HepG2 (cell line): ENCODE measurements at regions of chr7 and their contacts with region 1.

Region 1: GRCh38 chr7:102390697-102391484 is 5.3 kb upstream of the PRKRIP1 start:
- DNase-seq: peak; percentile 68
- ATAC-seq: peak; percentile 93
- H3K4me3 ChIP-seq: no peak overlapping the region
- H3K27ac ChIP-seq: no peak overlapping the region
- H3K4me1 ChIP-seq: peaks cover 7% of the 10 kb centered on the region; the same call in 1 of the 2 replicates
- H3K27me3 ChIP-seq: no peaks in the 10 kb centered on the region
- CTCF ChIP-seq: peak; percentile 95
- EP300 ChIP-seq: no peak
- POLR2A ChIP-seq: peak in 1 of 2 experiments; percentile 41; a peak in 1 of 4 replicates
- RAD21 ChIP-seq: peak; percentile 91

Region 2: DNA sequence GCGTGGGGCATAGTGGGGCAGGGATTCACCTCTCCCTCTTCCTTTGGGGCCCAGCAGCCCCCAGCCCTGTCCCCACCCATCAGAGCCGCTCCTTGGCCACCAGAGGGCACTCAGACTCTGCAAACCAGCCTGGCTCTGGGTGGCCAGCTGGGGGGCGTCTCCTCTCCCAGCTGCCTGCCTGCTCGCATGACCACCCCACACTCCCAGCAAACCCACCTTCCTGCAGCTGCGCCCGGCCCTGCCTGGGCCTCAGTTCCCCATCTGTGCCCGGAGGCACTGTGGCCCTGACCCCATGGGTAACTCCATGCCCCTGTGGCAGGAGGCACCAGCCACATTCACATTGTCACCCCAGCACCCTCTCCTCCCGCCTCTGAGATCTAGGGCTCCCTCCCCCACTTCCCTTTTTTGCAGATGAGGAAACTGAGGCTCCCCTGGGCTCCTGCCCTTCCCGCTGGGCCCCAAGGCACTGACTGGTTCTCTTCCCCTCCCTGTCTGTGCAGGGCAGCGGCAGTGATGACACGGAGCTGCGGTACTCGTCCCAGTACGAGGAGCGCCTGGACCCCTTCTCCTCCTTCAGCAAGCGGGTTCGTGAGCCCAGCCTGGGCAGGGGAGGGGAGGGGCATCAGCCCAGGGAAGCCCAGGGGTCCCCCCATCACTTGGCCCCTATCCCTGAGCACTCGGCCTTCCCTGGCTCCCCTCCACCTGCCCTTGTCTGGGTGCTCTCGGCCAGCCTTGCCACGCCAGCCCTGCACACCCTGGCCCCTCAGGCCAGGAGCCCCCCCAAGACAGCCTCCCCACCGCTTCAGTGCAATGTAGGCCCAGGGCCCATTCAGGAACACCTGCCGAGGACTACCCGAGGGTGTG is 111.1 kb before region 1 on chr7:
- CTCF ChIA-PET with region 1: interaction called, 51 read pairs
- POLR2A ChIA-PET with region 1: no interaction called
- in situ Hi-C with region 1: no loop called
- intact Hi-C with region 1: loop called (anchors 2 kb)
- DNase-seq: peak; percentile 65
- ATAC-seq: peak; percentile 92
- H3K4me3 ChIP-seq: no peak overlapping the region; a peak in 1 of 6 replicates
- H3K27ac ChIP-seq: no peak overlapping the region
- H3K4me1 ChIP-seq: peaks cover 11% of the 10 kb centered on the region
- H3K27me3 ChIP-seq: no peaks in the 10 kb centered on the region
- CTCF ChIP-seq: peak; percentile 95
- EP300 ChIP-seq: no peak
- POLR2A ChIP-seq: no peak
- RAD21 ChIP-seq: peak; percentile 94

Region 3: DNA sequence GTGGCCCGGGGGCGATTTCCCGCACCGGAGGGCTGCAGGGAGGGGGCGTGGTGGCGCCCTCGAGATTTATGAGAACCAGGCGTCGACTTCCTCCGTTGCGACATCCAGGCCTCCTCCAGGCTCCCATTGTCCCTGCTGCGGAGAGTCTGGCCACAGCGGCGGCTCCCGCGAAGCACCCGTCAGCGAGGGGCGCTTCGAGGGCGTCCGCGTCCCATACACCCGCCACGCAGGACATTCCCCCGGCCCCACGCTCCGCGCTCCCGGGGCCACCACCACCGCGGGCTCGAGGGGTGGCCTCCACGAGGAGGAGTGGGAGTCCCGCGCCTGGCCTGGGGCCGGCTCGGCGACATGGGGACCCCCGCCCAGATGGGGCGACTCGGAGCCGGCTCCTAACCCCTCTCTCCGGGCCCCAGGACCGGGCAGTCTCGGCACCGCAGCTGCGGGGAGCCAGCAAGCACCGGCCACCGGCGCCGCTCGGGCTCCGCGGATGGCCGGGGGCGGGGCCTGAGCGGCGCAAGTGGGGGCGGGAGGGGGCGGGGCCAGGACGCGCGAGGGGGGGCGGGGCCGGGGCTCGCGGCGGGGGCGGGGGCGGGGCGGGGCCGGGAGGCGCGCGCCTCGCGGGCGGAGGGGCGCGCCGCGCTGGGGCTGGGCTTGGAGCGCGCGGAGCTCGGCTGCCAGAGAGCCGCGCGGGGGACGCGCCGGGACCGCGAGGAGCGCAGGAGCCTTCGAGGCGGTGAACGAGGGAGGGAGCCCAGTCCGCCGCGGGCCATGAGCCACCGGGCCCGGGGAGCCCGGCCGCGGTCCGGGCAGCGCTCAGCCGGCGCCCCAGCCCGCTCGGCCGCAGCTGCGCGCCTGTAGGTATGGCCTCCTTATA is 104.4 kb before region 1 on chr7 and contains the start of gene SH2B2:
- CTCF ChIA-PET with region 1: no interaction called
- POLR2A ChIA-PET with region 1: no interaction called
- in situ Hi-C with region 1: loop called (anchors 5 kb)
- intact Hi-C with region 1: no loop called
- DNase-seq: peak; percentile 53
- ATAC-seq: peak; percentile 50
- H3K4me3 ChIP-seq: peak within 1 kb of the TSS; percentile 66 to 80 (median 77); a peak in 5 of 6 replicates
- H3K27ac ChIP-seq: peak within 1 kb of the TSS; percentile 46
- H3K4me1 ChIP-seq: peaks cover 33% of the 10 kb centered on the region
- H3K27me3 ChIP-seq: peaks cover 2 to 21% of the 10 kb centered on the region in 2 experiments; a peak in 3 of 5 replicates
- CTCF ChIP-seq: peak; percentile 43
- EP300 ChIP-seq: no peak
- POLR2A ChIP-seq: peak; percentile 28 to 75; a peak in 2 of 4 replicates
- RAD21 ChIP-seq: no peak; the same call in 1 of the 2 replicates
- total RNA-seq, gene SH2B2: 0.14 and 0.46 TPM in 2 replicates

Region 4: GRCh38 chr7:102473261-102473991 is 82.5 kb after region 1 on chr7:
- CTCF ChIA-PET with region 1: no interaction called
- POLR2A ChIA-PET with region 1: no interaction called
- in situ Hi-C with region 1: no loop called
- intact Hi-C with region 1: no loop called
- DNase-seq: no peak
- ATAC-seq: no peak
- H3K4me3 ChIP-seq: no peak overlapping the region
- H3K27ac ChIP-seq: no peak overlapping the region
- H3K4me1 ChIP-seq: peaks cover 8% of the 10 kb centered on the region; the same call in 1 of the 2 replicates
- H3K27me3 ChIP-seq: no peaks in the 10 kb centered on the region
- CTCF ChIP-seq: no peak
- EP300 ChIP-seq: no peak
- POLR2A ChIP-seq: no peak
- RAD21 ChIP-seq: no peak